ENCODE measurements at regions of chr12 and their contacts with region 1.

Region 1: DNA sequence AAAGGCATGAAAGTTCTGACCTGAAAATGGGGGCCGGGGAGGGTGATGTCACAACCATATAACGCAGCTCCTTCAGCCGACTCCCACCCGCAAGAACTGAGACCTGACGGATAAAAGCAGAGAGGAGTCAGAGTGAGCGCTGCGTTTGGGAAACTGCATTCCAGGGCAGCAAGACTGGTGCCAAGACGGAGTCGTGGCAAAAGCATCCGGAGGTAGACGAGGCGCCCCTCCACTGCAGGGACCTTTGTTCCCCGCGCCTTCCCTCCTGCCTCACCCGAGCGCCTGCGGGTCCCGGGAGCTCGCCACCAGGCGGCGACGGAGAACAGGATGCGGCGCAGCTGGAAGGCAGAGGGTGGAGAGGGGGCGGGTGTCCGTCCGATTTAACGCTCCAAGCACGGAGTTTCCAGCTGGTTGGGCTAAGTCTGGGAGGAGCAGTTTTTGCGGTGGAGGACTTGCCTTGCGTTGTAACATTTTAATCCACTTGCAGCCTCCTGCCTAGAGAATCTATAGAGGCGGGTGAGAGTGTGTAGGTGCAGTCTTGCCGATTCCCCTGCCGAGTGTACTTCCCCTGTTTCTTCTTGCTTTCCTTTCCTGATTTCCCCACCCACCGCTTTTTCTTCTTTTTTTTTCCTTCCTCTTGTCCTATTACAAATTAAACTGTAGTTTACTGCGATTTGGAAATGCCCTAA is 1.2 kb upstream of the CPNE8 start:
- DNase-seq: peak; percentile 47 to 63 (median 59)
- H3K4me3 ChIP-seq: peak overlapping the region; percentile 61 to 86
- H3K4me3 Mint-ChIP-seq: peak overlapping the region; percentile 91 to 97 (median 96)
- H3K27ac ChIP-seq: no peak overlapping the region
- H3K27ac Mint-ChIP-seq: peak overlapping the region; percentile 19 to 87 (median 77)
- H3K4me1 ChIP-seq: peaks cover 21% of the 10 kb centered on the region
- H3K4me1 Mint-ChIP-seq: peaks cover 13 to 33% (median 24%) of the 10 kb centered on the region in 4 donors
- H3K27me3 ChIP-seq: no peaks in the 10 kb centered on the region
- H3K27me3 Mint-ChIP-seq: peaks cover 2 to 11% of the 10 kb centered on the region in 2 donors

Region 2: GRCh38 chr12:38316391-38317129 is 590.1 kb before region 1 on chr12 and contains the start of gene ALG10B:
- CTCF ChIA-PET with region 1: interaction called, 5 read pairs
- POLR2A ChIA-PET with region 1: interaction called, 6 read pairs
- intact Hi-C with region 1: loop called (anchors 2 kb)
- DNase-seq: peak; percentile 92 to 95 (median 94)
- H3K4me3 ChIP-seq: peak within 1 kb of the TSS; percentile 73 to 90
- H3K4me3 Mint-ChIP-seq: peak within 1 kb of the TSS; percentile 93 to 97 (median 94)
- H3K27ac ChIP-seq: peak within 1 kb of the TSS; percentile 79
- H3K27ac Mint-ChIP-seq: peak within 1 kb of the TSS; percentile 97 to 99 (median 98)
- H3K4me1 ChIP-seq: peaks cover 16% of the 10 kb centered on the region
- H3K4me1 Mint-ChIP-seq: peaks cover 19 to 34% (median 27%) of the 10 kb centered on the region in 4 donors
- H3K27me3 ChIP-seq: no peaks in the 10 kb centered on the region
- H3K27me3 Mint-ChIP-seq: no peaks in the 10 kb centered on the region
- total RNA-seq, gene ALG10B: 12.1 to 12.5 TPM

Region 3: DNA sequence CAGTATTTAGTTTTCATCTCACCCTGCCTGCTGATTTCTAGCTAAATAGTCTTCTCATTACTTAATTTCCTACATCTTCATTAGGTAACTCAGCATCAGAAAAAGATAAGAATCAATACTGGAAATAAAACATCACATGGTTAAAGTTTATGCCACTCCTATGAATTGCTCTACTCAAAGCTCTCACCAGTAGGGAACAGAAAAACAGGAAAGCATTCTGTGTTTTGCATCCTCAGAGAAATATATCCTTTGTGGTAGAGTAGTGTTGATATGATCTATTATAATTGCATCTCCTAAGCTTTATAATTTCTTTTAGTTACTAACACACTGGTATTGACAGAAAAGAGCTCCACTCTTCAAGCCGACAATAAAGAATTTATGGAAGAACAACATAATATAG is 11.2 kb before region 1 on chr12:
- CTCF ChIA-PET with region 1: interaction called, 29 read pairs
- POLR2A ChIA-PET with region 1: interaction called, 4 read pairs
- intact Hi-C with region 1: no loop called
- DNase-seq: no peak
- H3K4me3 ChIP-seq: no peak overlapping the region
- H3K4me3 Mint-ChIP-seq: no peak overlapping the region
- H3K27ac ChIP-seq: no peak overlapping the region
- H3K27ac Mint-ChIP-seq: peak overlapping the region in 1 of 7 donors; percentile 55
- H3K4me1 ChIP-seq: no peaks in the 10 kb centered on the region
- H3K4me1 Mint-ChIP-seq: peaks cover 1 to 16% (median 7%) of the 10 kb centered on the region in 4 donors
- H3K27me3 ChIP-seq: no peaks in the 10 kb centered on the region
- H3K27me3 Mint-ChIP-seq: no peaks in the 10 kb centered on the region

Region 4: DNA sequence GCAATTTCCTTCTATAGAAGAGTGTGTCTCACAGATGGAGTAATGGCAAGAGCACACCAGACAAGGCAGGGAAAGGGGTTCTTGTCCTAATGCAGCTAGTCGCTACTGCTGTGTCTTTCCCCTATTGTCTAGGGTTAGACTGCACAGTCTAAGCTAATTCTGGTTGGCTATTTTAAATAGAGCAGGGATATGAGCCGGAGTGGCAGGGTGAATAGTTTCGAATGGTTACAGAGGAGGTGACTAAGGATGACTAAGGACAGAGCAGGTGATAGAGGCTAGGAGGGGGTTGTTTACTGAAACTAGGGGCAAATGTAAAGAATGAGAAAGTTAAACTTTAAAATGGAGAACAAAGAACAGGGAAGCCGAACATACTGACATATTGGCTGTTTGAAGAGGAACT is 24.4 kb after region 1 on chr12:
- CTCF ChIA-PET with region 1: no interaction called
- POLR2A ChIA-PET with region 1: no interaction called
- intact Hi-C with region 1: no loop called
- DNase-seq: no peak
- H3K4me3 ChIP-seq: no peak overlapping the region
- H3K4me3 Mint-ChIP-seq: peak overlapping the region in 1 of 8 donors; percentile 4
- H3K27ac ChIP-seq: no peak overlapping the region
- H3K27ac Mint-ChIP-seq: peak overlapping the region in 1 of 7 donors; percentile 49
- H3K4me1 ChIP-seq: no peaks in the 10 kb centered on the region
- H3K4me1 Mint-ChIP-seq: peaks cover 0 to 11% (median 2%) of the 10 kb centered on the region in 4 donors
- H3K27me3 ChIP-seq: peaks cover 3% of the 10 kb centered on the region
- H3K27me3 Mint-ChIP-seq: no peaks in the 10 kb centered on the region

Region 5: GRCh38 chr12:39103552-39104165 is 197.0 kb after region 1 on chr12:
- CTCF ChIA-PET with region 1: interaction called, 4 read pairs
- POLR2A ChIA-PET with region 1: no interaction called
- intact Hi-C with region 1: loop called (anchors 5 kb)
- DNase-seq: peak in 4 of 5 donors; percentile 32 to 36 (median 34)
- H3K4me3 ChIP-seq: no peak overlapping the region
- H3K4me3 Mint-ChIP-seq: no peak overlapping the region
- H3K27ac ChIP-seq: no peak overlapping the region
- H3K27ac Mint-ChIP-seq: no peak overlapping the region
- H3K4me1 ChIP-seq: no peaks in the 10 kb centered on the region
- H3K4me1 Mint-ChIP-seq: peaks cover 0 to 3% (median 0%) of the 10 kb centered on the region in 4 donors
- H3K27me3 ChIP-seq: no peaks in the 10 kb centered on the region
- H3K27me3 Mint-ChIP-seq: peaks cover 0 to 4% of the 10 kb centered on the region in 2 donors